ENCODE measurements at regions of chr6 and their contacts with region 1.

Region 1: DNA sequence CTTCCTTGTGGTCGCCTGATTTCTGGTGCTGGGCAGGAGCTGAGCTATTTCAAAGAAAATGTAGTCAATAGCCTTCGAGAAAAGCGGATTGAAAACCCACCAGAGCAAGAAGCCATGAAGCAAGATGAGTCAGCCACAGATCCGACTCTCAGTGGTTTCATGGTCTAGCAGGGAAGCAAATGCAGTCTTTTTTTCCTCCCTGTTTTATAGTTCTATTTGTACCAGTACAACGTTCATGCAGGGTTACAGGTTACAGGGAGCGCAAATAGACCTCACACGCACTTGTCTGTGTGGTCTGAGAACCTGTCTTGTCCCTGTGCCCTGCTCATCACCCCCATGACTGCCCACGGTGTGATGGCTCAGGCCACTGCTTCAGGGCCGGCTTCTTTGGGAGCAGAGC is 309.8 kb upstream of the SUPT3H start:
- DNase-seq: no peak
- ATAC-seq: peak; percentile 88
- H3K4me3 Mint-ChIP-seq: peak overlapping the region; percentile 3
- H3K27ac Mint-ChIP-seq: no peak overlapping the region
- H3K4me1 Mint-ChIP-seq: peaks cover 25% of the 10 kb centered on the region
- H3K27me3 Mint-ChIP-seq: peaks cover 2% of the 10 kb centered on the region
- CTCF ChIP-seq: no peak

Region 2: GRCh38 chr6:45522486-45522885 is 165.1 kb before region 1 on chr6:
- CTCF ChIA-PET with region 1: no interaction called
- POLR2A ChIA-PET with region 1: no interaction called
- intact Hi-C with region 1: no loop called
- DNase-seq: no peak
- ATAC-seq: no peak
- H3K4me3 Mint-ChIP-seq: no peak overlapping the region
- H3K27ac Mint-ChIP-seq: no peak overlapping the region
- H3K4me1 Mint-ChIP-seq: peaks cover 5% of the 10 kb centered on the region
- H3K27me3 Mint-ChIP-seq: no peaks in the 10 kb centered on the region
- CTCF ChIP-seq: no peak

Region 3: DNA sequence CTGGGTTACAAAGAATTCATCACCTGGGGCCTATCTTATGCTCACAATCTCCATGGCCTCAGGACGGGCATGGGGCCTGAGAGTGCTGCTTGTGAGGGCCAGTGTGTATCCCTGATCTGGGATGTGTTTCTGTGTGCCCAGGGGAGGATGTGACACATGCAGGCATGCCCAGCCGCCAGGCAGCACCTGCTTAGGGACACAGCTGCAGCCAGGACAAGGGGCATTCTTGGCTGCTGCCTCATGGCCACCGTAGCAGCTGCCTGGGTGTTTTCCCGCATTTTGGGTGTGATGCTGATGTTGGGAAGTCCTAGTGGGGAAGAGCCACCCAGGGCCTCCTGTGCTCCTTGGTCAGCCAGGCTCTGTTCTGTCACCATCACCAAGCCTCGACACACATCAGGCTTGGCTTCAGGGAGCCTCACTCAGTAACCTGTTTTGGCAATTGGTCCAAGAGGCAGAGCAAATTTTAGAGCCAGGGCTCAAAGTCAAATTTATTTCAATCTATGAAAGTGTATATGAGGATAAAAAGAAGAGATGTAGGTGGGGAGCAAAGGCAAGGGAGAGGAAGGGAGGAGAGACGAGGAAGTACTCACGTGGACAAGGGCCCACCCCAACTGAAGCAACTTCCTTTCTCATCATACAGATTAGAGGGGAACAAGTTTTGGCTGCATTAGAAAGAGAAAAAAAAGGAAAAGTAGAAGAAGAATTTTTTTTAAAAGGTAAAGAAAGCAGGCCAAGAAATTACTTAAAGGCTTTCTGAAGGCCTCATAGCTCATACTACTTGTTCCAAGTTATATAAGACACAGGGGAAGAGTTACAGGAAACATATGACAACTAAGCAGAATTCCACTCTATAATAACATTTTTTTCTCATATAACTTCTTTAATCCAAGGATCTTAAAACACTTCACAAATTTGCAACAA is 40.0 kb before region 1 on chr6:
- CTCF ChIA-PET with region 1: no interaction called
- POLR2A ChIA-PET with region 1: no interaction called
- intact Hi-C with region 1: loop called (anchors 5 kb)
- DNase-seq: no peak
- ATAC-seq: no peak
- H3K4me3 Mint-ChIP-seq: no peak overlapping the region
- H3K27ac Mint-ChIP-seq: no peak overlapping the region
- H3K4me1 Mint-ChIP-seq: peaks cover 16% of the 10 kb centered on the region
- H3K27me3 Mint-ChIP-seq: no peaks in the 10 kb centered on the region
- CTCF ChIP-seq: no peak

Region 4: GRCh38 chr6:46160102-46160501 is 472.5 kb after region 1 on chr6:
- CTCF ChIA-PET with region 1: no interaction called
- POLR2A ChIA-PET with region 1: no interaction called
- intact Hi-C with region 1: no loop called
- DNase-seq: no peak
- ATAC-seq: no peak
- H3K4me3 Mint-ChIP-seq: no peak overlapping the region
- H3K27ac Mint-ChIP-seq: no peak overlapping the region
- H3K4me1 Mint-ChIP-seq: no peaks in the 10 kb centered on the region
- H3K27me3 Mint-ChIP-seq: peaks cover 2% of the 10 kb centered on the region
- CTCF ChIP-seq: no peak